ENCODE measurements at regions of chr7 and their contacts with region 1.

Region 1: DNA sequence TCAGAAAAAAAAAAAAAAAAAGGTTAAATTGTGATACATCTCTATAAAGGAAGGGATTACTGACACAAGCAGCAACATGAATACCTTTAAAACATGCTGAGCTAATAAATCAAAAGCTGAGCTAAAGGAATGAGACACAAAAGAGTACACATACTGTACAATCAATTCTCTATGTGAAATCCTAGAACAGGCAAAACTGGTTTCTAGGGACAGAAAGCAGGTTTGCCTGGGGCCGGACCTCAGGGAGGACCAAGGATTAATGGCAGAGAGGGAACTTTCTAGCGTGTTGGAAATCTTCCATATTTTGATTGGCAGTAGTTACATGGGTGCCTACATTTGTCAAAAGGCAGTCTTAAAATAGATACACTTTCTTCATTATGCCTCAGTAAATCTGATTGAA is 52.5 kb downstream of the KLRG2 start:
- DNase-seq: peak; percentile 80 to 93
- H3K4me3 ChIP-seq: no peak overlapping the region
- H3K27ac ChIP-seq: peak overlapping the region; percentile 48
- H3K4me1 ChIP-seq: peaks cover 28% of the 10 kb centered on the region
- H3K27me3 ChIP-seq: no peaks in the 10 kb centered on the region
- CTCF ChIP-seq: no peak

Region 2: GRCh38 chr7:138961159-138961558 is 469.9 kb before region 1 on chr7:
- CTCF ChIA-PET with region 1: no interaction called
- POLR2A ChIA-PET with region 1: no interaction called
- intact Hi-C with region 1: no loop called
- DNase-seq: no peak
- H3K4me3 ChIP-seq: no peak overlapping the region
- H3K27ac ChIP-seq: no peak overlapping the region
- H3K4me1 ChIP-seq: peaks cover 21% of the 10 kb centered on the region
- H3K27me3 ChIP-seq: no peaks in the 10 kb centered on the region
- CTCF ChIP-seq: no peak

Region 3: DNA sequence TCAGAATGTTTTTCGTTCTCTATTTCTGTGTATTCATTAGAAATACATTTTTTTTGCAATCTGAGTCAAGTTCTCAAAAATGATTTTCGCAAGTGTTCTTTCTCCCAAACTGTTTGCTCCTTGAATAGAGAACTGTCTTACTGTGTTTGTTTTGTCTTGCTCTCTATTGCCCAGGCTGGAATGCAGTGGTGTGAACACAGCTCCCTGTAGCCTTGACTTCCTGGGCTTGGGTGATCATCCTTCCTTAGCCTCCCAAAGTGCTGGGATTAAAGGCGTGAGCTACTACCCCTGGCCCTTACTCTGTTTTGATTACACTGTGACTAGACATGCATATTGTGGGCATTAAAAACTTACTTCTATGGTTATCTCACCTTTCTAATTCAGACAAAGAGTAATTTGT is 14.6 kb before region 1 on chr7:
- CTCF ChIA-PET with region 1: interaction called, 7 read pairs
- POLR2A ChIA-PET with region 1: interaction called, 11 read pairs
- intact Hi-C with region 1: no loop called
- DNase-seq: no peak
- H3K4me3 ChIP-seq: no peak overlapping the region
- H3K27ac ChIP-seq: no peak overlapping the region
- H3K4me1 ChIP-seq: no peaks in the 10 kb centered on the region
- H3K27me3 ChIP-seq: no peaks in the 10 kb centered on the region
- CTCF ChIP-seq: no peak

Region 4: DNA sequence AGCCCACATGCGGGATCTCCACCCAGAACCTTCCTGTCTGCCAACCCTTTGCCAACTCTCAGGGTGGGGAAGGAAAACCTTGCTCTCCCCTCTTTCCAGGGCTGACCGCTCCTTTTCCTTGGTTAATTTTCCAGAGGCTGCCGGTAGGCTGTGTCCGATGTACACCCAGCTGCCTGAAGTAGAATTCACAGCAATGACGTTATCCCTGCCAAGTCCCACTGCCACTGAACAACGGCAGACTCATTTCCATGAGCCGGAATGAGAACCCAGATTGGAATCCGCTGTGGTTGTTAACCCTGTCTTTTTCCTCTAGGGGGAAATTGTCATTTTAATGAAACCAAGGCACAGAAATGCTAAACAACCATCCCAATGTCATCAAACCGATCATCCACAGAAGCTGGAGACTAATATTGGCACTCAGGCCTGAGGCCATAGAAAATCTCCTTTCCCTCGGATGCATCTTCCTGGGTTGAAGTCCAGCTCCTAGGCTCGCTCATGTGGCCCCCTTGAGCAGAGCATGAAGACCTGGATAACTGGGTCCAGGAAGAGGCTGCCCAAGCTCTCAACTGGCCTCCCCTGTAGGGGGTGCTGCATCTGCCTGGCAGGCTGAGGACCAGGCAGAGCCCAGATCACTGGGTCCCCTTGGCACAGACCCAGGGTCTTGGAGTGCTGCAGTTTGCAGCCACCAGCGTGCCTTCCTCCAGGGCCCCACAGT is 22.1 kb after region 1 on chr7:
- CTCF ChIA-PET with region 1: interaction called, 10 read pairs
- POLR2A ChIA-PET with region 1: interaction called, 6 read pairs
- intact Hi-C with region 1: no loop called
- DNase-seq: no peak
- H3K4me3 ChIP-seq: no peak overlapping the region
- H3K27ac ChIP-seq: no peak overlapping the region
- H3K4me1 ChIP-seq: peaks cover 7% of the 10 kb centered on the region
- H3K27me3 ChIP-seq: no peaks in the 10 kb centered on the region
- CTCF ChIP-seq: no peak

Region 5: GRCh38 chr7:139471740-139472353 is 40.8 kb after region 1 on chr7:
- CTCF ChIA-PET with region 1: interaction called, 13 read pairs
- POLR2A ChIA-PET with region 1: interaction called, 5 read pairs
- intact Hi-C with region 1: loop called (anchors 5 kb)
- DNase-seq: peak; percentile 58 to 76
- H3K4me3 ChIP-seq: no peak overlapping the region
- H3K27ac ChIP-seq: peak overlapping the region; percentile 25
- H3K4me1 ChIP-seq: peaks cover 12% of the 10 kb centered on the region
- H3K27me3 ChIP-seq: no peaks in the 10 kb centered on the region
- CTCF ChIP-seq: no peak

Region 6: GRCh38 chr7:139502226-139502625 is 71.2 kb after region 1 on chr7:
- CTCF ChIA-PET with region 1: interaction called, 7 read pairs
- POLR2A ChIA-PET with region 1: no interaction called
- intact Hi-C with region 1: loop called (anchors 5 kb)
- DNase-seq: no peak
- H3K4me3 ChIP-seq: no peak overlapping the region
- H3K27ac ChIP-seq: no peak overlapping the region
- H3K4me1 ChIP-seq: no peaks in the 10 kb centered on the region
- H3K27me3 ChIP-seq: no peaks in the 10 kb centered on the region
- CTCF ChIP-seq: no peak

Region 7: DNA sequence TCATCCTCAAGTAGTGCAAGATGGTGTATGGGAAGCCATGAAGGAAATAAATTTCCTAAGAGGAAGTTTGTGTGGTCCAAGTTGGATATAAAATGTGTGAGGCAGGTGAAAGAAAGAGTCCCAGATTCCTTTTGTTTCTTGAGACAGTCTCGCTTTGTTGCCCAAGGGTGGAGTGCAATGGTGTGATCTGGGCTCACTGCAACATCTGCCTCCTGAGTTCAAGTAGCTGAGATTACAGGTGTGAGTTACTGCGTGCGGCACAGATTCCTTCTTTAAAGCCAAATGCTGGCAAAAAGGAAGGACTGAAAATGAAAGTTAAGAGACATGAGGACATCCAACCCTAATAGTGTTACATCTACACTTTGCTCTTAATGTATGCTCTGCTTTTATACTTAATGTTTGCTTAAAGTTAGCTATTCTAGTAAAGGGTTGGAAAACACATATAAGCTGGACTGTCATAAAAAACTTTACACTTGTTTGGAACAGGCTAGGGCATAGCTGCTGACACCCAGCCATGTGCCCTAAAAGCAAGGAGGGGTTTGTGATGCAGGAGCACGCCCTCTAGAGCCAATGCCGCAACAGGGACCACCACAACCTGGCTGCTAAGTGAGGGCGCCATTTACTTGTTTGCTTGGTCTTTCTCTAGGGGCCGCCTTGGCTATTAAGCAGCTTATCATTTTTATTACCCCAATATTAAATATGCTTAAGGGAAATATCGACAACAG is 127.0 kb after region 1 on chr7:
- CTCF ChIA-PET with region 1: no interaction called
- POLR2A ChIA-PET with region 1: no interaction called
- intact Hi-C with region 1: loop called (anchors 5 kb)
- DNase-seq: no peak
- H3K4me3 ChIP-seq: no peak overlapping the region
- H3K27ac ChIP-seq: no peak overlapping the region
- H3K4me1 ChIP-seq: no peaks in the 10 kb centered on the region
- H3K27me3 ChIP-seq: no peaks in the 10 kb centered on the region
- CTCF ChIP-seq: no peak

Region 8: DNA sequence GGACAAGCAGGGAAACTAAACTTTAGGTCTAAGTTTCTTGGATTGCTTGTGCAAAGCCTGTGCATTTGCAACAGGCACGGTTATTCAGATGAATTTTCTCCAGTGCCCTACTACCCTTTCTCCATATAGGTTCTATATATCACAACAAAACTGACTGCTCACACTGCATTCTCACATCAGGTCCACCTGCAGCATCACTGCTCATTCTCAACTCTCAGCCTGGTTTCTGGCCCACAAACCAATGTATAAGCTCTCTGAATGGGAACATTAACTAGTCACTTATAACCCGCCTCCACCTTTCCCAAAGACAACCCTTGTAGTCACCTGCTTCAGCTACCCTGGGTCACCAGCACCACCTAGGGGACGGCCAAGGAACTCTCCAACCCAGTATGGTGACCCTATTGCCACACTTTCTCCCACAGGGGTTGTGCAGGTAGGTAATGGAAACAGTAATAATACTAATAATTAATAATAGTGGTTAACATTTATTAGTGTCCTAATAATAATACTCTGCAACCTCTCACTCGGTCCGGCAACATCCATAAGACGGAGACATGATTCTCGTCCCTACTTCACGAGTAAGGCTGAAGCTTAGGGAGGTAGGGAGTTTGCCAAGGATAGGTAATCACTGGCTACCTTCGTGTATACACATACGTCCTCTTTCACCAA is 189.8 kb after region 1 on chr7:
- CTCF ChIA-PET with region 1: interaction called, 6 read pairs
- POLR2A ChIA-PET with region 1: no interaction called
- intact Hi-C with region 1: loop called (anchors 2 kb)
- DNase-seq: peak; percentile 55 to 65
- H3K4me3 ChIP-seq: no peak overlapping the region
- H3K27ac ChIP-seq: no peak overlapping the region
- H3K4me1 ChIP-seq: no peaks in the 10 kb centered on the region
- H3K27me3 ChIP-seq: no peaks in the 10 kb centered on the region
- CTCF ChIP-seq: peak; percentile 89